HEK293 (cell line): ENCODE measurements at regions of chr22 and their contacts with region 1.

Region 1: GRCh38 chr22:50244420-50245213 is at the start of gene TUBGCP6:
- H3K4me3 ChIP-seq: peak within 1 kb of the TSS; percentile 97
- H3K27ac ChIP-seq: peak within 1 kb of the TSS; percentile 87
- H3K4me1 ChIP-seq: peaks cover 3% of the 10 kb centered on the region; the same call in 1 of the 2 replicates
- CTCF ChIP-seq: peak; percentile 78; the same call in 1 of the 2 replicates

Region 2: GRCh38 chr22:50341977-50342650 is 97.5 kb after region 1 on chr22:
- CTCF ChIA-PET with region 1: interaction called, 25 read pairs
- POLR2A ChIA-PET with region 1: no interaction called
- H3K4me3 ChIP-seq: peak overlapping the region; percentile 33
- H3K27ac ChIP-seq: peak overlapping the region; percentile 95
- H3K4me1 ChIP-seq: no peaks in the 10 kb centered on the region
- CTCF ChIP-seq: peak; percentile 97